Aorta (tissue), 5 donors: ENCODE measurements at regions of chr16 and their contacts with region 1.

Region 1: DNA sequence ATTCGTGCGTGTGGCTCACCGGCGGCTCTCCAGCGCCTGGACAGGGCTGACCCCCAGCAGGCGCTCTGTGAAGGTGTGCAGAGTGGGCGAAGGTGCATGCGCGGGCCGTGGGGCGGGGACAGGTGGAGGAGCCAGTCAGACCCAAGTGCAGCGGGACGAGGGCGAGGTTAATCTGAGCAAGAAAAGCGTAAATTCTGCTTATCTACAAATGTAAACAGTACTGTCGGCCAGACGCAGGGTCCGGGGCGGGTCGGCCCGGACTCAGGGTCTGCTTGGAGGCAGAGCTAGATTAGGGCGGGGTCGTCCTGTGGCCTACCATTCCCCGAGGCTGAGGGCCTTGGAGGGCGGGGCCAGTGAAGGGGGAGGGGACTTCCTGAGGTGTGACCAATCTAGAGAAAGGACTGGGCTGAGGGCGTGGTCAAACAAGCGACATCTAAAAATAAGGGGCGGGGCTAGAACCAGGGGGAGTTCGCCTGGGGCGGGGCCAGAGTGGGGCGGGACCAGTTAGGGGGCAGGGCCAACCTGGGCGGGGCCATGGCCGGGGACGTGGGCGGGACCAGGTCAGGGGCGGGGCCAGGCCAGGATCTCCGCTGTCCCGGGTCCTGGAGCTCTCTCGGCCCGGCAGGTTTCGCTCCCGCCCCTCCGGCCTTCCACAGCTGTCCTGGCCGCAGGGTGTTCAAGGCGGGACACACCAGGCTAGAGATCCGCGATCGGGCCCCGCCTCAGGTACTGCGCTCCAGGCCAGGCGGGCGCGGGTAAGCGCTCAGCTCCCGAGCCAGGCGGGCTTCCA is at the start of gene SEC14L5:
- DNase-seq: peak; percentile 97 to 99
- ATAC-seq: peak; percentile 98
- H3K4me3 ChIP-seq: peak within 1 kb of the TSS; percentile 22
- H3K27ac ChIP-seq: peak within 1 kb of the TSS in 1 of 2 donors; percentile 8
- H3K4me1 ChIP-seq: no peaks in the 10 kb centered on the region
- H3K27me3 ChIP-seq: no peaks in the 10 kb centered on the region
- total RNA-seq, gene SEC14L5: 0.29 to 0.90 TPM

Region 2: DNA sequence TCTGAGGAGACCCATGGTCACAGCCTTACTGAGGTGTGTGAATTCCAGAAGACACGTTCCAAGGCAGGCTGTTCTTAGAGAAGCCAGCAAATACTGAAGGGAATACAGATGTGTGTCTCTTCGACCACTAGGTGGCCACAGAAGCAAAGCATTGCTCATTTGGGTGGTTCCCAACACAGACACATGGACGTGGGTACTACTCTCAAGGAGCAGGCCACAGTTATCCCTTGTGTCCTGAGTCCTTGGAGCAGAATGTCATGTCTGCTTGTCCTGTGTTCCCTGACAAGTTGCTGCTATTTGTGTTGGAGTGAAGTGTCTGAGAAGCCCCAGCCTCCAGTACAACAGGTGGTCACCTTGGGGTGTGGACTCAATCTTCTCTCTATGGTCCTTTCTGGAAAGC is 451.5 kb before region 1 on chr16:
- intact Hi-C with region 1: loop called in 1 of 2 experiments (anchors 10 kb)
- DNase-seq: peak in 1 of 2 donors; percentile 67
- ATAC-seq: peak; percentile 75
- H3K4me3 ChIP-seq: no peak overlapping the region
- H3K27ac ChIP-seq: no peak overlapping the region
- H3K4me1 ChIP-seq: no peaks in the 10 kb centered on the region
- H3K27me3 ChIP-seq: no peaks in the 10 kb centered on the region

Region 3: DNA sequence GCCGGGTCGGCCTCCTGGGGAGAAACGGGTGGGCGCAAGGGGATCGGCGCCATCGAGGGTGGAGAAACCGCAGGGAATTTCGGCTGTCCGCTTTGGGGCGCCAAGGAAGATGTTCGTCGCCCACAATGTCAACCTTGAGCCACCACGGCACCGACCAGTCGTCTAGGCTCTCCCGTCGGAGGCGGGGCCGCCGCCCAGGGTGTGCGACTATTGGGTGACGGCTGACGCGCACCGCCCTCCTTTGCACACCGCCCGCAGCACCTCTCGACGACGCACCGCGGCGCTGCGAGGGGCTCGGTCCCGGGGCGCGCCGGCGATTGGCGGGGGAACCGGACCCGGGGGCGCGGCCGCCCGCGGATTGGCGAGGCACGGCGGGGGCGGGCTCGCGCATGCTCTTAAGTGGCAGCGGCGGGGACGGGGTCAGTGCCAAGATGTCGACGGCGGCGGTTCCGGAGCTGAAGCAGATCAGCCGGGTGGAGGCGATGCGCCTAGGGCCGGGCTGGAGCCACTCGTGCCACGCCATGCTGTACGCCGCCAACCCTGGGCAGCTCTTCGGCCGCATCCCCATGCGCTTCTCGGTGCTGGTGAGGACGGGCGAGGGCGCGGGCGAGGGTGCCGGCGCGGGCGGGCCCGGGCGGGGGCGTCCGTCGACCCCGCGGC is 264.5 kb before region 1 on chr16 and contains the start of gene NUDT16L1:
- intact Hi-C with region 1: loop called in 1 of 2 experiments (anchors 5 kb)
- DNase-seq: peak; percentile 98 to 99
- ATAC-seq: peak; percentile 95
- H3K4me3 ChIP-seq: peak within 1 kb of the TSS; percentile 55 to 74
- H3K27ac ChIP-seq: peak within 1 kb of the TSS in 1 of 2 donors; percentile 62
- H3K4me1 ChIP-seq: no peaks in the 10 kb centered on the region
- H3K27me3 ChIP-seq: no peaks in the 10 kb centered on the region
- total RNA-seq, gene NUDT16L1: 11.1 to 16.2 TPM

Region 4: DNA sequence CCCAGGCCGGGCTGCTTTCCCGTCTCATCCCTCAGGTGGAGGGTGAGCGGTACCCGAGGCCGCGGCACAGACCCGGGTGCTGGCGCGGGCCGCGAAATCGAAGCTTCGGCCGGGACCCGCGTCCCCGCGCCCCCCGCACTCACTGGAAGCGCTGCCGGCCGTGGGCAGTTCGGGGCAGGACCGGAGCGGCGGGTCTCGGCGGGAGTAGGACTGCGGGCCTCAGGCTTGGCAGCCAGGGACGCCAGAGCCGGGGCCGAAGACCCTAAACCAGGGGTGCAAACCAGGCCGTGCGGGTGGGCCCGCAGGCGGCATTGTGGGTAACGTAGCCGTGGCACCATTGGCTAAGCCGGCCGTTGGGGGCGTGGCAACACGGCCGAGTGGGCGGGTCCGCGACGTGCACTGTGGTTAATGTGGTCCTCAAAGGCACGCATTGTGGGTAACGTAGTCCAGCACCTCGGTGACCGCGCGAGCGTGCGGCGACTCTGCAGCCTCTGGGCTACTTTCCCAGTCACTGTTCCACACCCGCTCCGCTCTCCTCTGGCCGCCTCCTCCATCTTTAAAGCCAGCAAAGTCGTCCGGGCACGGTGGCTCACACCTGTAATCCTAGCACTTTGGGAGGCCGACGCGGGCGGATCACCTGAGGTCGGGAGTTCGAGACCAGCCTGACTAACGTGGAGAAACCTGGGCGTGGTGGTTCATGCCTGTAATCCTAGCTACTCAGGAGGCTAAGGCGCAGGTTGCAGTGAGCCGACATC is 190.9 kb before region 1 on chr16 and contains the start of gene ZNF500:
- intact Hi-C with region 1: loop called in 1 of 2 experiments (anchors 2 kb)
- DNase-seq: peak; percentile 99 to 100
- ATAC-seq: peak; percentile 95
- H3K4me3 ChIP-seq: peak within 1 kb of the TSS; percentile 77 to 94
- H3K27ac ChIP-seq: peak within 1 kb of the TSS in 1 of 2 donors; percentile 73
- H3K4me1 ChIP-seq: no peaks in the 10 kb centered on the region
- H3K27me3 ChIP-seq: no peaks in the 10 kb centered on the region
- total RNA-seq, gene ZNF500: 13.0 to 17.0 TPM

Region 5: DNA sequence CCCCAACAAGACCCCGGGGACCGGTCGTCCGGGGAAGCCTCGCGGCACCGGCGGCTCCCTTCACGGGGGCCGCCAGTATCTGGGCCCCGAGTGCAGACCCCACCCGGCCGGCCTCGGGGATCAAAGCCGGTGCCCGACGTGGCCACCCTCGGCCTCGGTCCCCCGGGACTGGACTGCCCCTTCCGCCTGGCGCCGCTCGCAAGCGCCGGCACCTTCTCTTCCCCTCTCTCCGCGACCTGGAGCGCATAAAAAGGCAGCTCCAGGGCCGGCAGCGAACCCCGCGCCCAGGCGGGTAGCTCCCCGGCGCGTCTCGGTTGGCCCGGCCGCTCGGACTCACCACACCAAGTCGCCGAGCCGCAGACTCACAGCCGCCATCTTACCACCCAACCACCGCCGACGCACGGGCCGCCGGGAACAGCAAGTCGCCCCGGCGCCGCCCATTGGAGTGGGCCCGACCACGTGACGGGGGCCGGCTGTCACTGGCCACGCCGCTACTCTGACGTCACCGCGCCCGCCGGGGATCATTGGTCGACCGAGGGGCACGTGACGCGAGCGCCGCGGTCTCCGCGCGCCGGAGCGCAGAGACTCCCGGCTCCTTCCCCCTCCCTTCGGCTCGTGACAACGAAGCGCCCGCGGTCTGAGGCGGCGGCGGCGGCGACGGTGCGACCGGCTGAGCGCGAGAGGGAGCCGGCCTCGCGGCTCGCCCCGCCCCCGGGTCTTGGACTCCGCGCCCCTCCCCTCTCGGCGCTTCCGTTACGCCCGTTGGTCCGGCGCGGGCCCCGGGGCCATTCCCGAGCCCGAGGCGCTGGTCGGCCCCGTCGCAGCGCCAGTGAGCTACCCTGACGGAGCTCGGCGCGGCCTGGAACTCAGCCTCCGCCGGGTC is 110.8 kb before region 1 on chr16 and contains the starts of genes GLYR1 and UBN1:
- intact Hi-C with region 1: loop called (anchors 1 to 2 kb)
- DNase-seq: peak; percentile 100
- ATAC-seq: peak; percentile 99
- H3K4me3 ChIP-seq: peak within 1 kb of the TSS; percentile 86 to 93
- H3K27ac ChIP-seq: peak within 1 kb of the TSS; percentile 67 to 87
- H3K4me1 ChIP-seq: no peaks in the 10 kb centered on the region
- H3K27me3 ChIP-seq: no peaks in the 10 kb centered on the region
- total RNA-seq, gene GLYR1: 70.2 to 73.2 TPM
- total RNA-seq, gene UBN1: 23.0 to 33.2 TPM

Region 6: DNA sequence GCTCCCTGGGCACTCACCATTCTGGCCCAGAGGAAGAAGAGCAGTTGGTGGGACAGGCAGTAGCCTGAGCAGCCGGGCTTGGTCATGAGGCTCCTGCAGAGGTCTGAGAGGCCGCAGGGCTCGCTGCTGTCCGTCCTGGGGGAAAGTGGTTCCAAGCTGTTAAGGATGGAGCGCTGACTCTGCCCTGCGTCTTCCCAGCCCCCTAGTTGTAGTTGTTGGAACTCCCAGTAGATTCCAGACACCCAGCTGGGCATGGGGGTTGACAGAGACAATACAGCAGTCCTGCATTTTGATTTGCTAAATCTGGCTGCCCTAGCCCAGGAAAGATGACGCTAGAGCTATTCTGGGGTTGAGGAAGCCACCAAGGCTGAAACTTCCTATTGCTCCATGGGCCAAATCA is 100.6 kb after region 1 on chr16:
- intact Hi-C with region 1: no loop called
- DNase-seq: peak in 1 of 2 donors; percentile 65
- ATAC-seq: no peak
- H3K4me3 ChIP-seq: no peak overlapping the region
- H3K27ac ChIP-seq: no peak overlapping the region
- H3K4me1 ChIP-seq: no peaks in the 10 kb centered on the region
- H3K27me3 ChIP-seq: no peaks in the 10 kb centered on the region